Activated naive CD4-positive, alpha-beta T cell treated with anti-CD3 and anti-CD28 coated beads for 36 hours (primary cell): ENCODE measurements at regions of chr5 and their contacts with region 1.

Region 1: DNA sequence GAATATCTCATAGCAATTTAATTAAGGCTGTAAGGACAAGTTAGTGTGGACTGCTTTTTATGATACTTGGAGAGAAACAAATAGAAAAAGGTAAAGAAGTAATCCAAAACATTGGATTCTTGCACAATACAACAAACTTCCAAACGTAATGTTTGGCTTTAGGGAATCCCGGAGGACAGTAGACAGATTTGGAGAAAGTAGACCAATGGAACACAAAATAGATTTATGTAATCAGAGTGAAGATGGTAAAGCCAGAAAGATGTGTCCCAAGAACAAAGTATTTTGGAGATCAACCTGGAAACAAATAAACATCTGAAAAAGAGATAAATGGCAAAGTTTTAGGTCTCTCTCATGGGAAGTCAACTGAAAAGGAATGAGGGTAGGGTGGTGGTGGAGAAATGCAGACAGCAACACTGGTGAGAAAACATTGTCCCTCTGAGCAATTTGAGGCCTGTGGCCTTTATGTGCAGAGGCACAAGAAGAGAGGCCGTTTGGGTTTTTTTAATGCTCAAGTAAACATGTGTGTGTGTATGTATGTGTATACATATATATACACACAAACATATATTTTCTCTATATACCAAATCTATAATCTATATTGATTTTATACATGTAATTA is 620.6 kb downstream of the PDE4D start:
- DNase-seq: no peak
- H3K4me3 Mint-ChIP-seq: no peak overlapping the region
- H3K27ac Mint-ChIP-seq: no peak overlapping the region
- H3K4me1 Mint-ChIP-seq: peaks cover 10% of the 10 kb centered on the region
- H3K27me3 Mint-ChIP-seq: peaks cover 16% of the 10 kb centered on the region

Region 2: GRCh38 chr5:59246145-59246869 is 26.6 kb before region 1 on chr5:
- CTCF ChIA-PET with region 1: no interaction called
- intact Hi-C with region 1: loop called (anchors 2 kb)
- DNase-seq: no peak
- H3K4me3 Mint-ChIP-seq: no peak overlapping the region
- H3K27ac Mint-ChIP-seq: no peak overlapping the region
- H3K4me1 Mint-ChIP-seq: no peaks in the 10 kb centered on the region
- H3K27me3 Mint-ChIP-seq: peaks cover 18% of the 10 kb centered on the region